A549 (cell line): ENCODE measurements at regions of chr4 and their contacts with region 1.

Region 1: DNA sequence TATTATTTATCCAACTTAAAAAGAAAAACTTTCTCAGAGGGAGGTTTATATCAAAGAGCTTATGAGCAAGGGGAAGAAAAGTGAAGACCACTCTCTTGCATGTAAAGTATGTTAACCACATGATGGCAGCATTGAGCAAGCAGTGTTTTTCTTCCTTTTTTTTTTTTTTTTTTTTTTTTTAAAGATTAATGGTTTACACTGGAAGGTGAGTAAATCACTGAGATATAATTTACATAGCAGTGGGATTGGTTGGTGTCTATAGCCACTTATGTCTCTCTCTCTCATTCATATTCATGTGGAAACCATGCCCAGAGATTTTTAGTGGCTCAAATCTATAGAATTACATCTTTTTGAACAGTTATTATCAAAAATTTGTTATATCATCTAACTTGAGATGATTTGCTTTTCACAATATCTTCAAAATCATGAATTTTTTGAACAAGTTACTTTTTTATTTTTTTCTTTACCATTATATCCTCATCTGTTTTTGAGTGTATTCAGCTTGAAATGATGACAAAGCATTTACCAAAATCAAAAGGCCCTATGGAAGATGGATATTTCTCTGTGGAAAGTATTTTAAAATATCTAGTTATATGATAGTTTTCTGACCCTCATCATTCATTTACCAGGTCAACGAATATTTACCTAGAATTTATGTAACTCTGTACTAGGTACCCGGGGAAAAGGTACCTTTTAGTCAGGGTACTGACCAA is 31.6 kb downstream of the MTHFD2L start:
- DNase-seq: peak; percentile 32 to 69
- ATAC-seq: peak in 1 of 2 experiments; percentile 68; a peak in 3 of 6 replicates
- H3K4me3 ChIP-seq: no peak overlapping the region
- H3K27ac ChIP-seq: no peak overlapping the region; a peak in 1 of 6 replicates
- H3K4me1 ChIP-seq: peaks cover 12% of the 10 kb centered on the region
- CTCF ChIP-seq: peak; percentile 72
- EP300 ChIP-seq: no peak
- POLR2A ChIP-seq: no peak
- RAD21 ChIP-seq: peak; percentile 72 to 73

Region 2: DNA sequence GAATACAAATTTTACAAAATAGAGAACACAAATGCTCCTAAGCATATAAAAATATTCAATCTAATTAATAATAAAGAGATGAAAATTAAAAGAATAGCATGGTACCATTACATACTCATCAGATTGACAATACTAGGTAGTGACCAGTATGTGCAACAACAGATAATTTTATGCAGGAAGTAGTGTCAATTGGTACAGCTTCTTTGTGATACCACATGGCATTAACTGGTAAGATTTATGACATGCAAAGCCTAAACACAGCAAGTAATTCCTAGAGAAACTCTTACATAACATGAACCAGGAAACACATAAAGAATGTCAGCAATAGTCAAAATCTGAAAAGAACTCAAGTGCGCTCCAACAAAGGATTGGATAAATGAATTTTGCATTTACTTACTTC is 116.7 kb before region 1 on chr4:
- CTCF ChIA-PET with region 1: no interaction called
- POLR2A ChIA-PET with region 1: no interaction called
- DNase-seq: no peak
- ATAC-seq: no peak
- H3K4me3 ChIP-seq: no peak overlapping the region
- H3K27ac ChIP-seq: no peak overlapping the region
- H3K4me1 ChIP-seq: no peaks in the 10 kb centered on the region
- CTCF ChIP-seq: no peak
- EP300 ChIP-seq: no peak
- POLR2A ChIP-seq: no peak
- RAD21 ChIP-seq: no peak

Region 3: DNA sequence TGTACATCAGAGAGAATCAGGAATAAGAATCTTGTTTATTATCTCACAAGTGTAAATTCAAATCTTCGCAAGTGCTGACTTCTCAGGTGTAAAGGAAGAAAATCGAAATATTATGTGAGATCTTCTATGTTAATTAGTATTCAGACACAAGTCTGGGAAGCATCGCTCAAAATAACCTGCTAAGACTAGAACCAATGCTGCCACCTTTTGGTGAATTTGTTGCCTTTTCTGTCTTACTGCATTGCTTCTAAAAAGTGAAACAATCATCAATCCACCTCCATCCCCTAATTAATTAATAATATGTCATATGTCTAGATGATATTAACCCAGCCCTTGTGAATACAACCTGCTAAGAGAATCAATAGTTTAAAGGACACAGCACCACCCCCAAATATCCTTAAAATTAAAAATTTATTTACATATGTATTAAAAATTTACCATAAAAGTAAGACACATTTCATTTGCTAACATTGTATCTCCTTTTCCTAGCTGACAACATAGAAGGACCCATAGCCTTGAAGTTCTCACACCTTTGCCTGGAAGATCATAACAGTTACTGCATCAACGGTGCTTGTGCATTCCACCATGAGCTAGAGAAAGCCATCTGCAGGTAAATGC is 122.3 kb after region 1 on chr4:
- CTCF ChIA-PET with region 1: interaction called, 13 read pairs
- POLR2A ChIA-PET with region 1: no interaction called
- DNase-seq: peak; percentile 8 to 67
- ATAC-seq: peak in 1 of 2 experiments; percentile 70; a peak in 3 of 6 replicates
- H3K4me3 ChIP-seq: no peak overlapping the region
- H3K27ac ChIP-seq: no peak overlapping the region
- H3K4me1 ChIP-seq: peaks cover 5% of the 10 kb centered on the region; the same call in 1 of the 3 replicates
- CTCF ChIP-seq: peak; percentile 79
- EP300 ChIP-seq: no peak
- POLR2A ChIP-seq: no peak
- RAD21 ChIP-seq: peak; percentile 82 to 84